ENCODE measurements at regions of chr10 and their contacts with region 1.

Region 1: GRCh38 chr10:32938554-32939061 is 19.4 kb downstream of the ITGB1 start:
- DNase-seq: no peak
- H3K4me3 Mint-ChIP-seq: no peak overlapping the region
- H3K27ac Mint-ChIP-seq: no peak overlapping the region
- H3K4me1 Mint-ChIP-seq: peaks cover 11% of the 10 kb centered on the region
- H3K27me3 Mint-ChIP-seq: no peaks in the 10 kb centered on the region

Region 2: GRCh38 chr10:32980558-32981468 is 42.2 kb after region 1 on chr10:
- intact Hi-C with region 1: loop called (anchors 1 kb)
- DNase-seq: peak; percentile 68
- H3K4me3 Mint-ChIP-seq: peak overlapping the region; percentile 88
- H3K27ac Mint-ChIP-seq: peak overlapping the region; percentile 88
- H3K4me1 Mint-ChIP-seq: peaks cover 28% of the 10 kb centered on the region
- H3K27me3 Mint-ChIP-seq: no peaks in the 10 kb centered on the region

Measured in activated T-helper 1 cell treated with anti-CD3 and anti-CD28 coated beads, Interleukin-12 subunit alpha, Interleukin-12 subunit beta, Interleukin-2, Interleukin-4 antibody, amounts not matched to agents 30 ng/mL and 10 ng/mL and 1 ng/mL, durations not matched to agents 14 hours and 24 hours and 36 hours (primary cell).